CD8-positive, alpha-beta T cell (primary cell): ENCODE measurements at regions of chr1 and their contacts with region 1.

Region 1: GRCh38 chr1:231421993-231422764 is at the start of gene EGLN1:
- DNase-seq: peak; percentile 65 to 91 (median 79)
- ATAC-seq: peak; percentile 86
- H3K4me3 ChIP-seq: peak within 1 kb of the TSS; percentile 73 to 80
- H3K4me3 Mint-ChIP-seq: peak within 1 kb of the TSS; percentile 95
- H3K27ac ChIP-seq: peak within 1 kb of the TSS; percentile 40 to 60
- H3K27ac Mint-ChIP-seq: peak within 1 kb of the TSS; percentile 93
- H3K4me1 ChIP-seq: peaks cover 39% of the 10 kb centered on the region
- H3K4me1 Mint-ChIP-seq: peaks cover 48% of the 10 kb centered on the region
- H3K27me3 ChIP-seq: no peaks in the 10 kb centered on the region
- H3K27me3 Mint-ChIP-seq: no peaks in the 10 kb centered on the region
- CTCF ChIP-seq: peak; percentile 40
- total RNA-seq, gene EGLN1: 8.5 to 12.2 TPM

Region 2: DNA sequence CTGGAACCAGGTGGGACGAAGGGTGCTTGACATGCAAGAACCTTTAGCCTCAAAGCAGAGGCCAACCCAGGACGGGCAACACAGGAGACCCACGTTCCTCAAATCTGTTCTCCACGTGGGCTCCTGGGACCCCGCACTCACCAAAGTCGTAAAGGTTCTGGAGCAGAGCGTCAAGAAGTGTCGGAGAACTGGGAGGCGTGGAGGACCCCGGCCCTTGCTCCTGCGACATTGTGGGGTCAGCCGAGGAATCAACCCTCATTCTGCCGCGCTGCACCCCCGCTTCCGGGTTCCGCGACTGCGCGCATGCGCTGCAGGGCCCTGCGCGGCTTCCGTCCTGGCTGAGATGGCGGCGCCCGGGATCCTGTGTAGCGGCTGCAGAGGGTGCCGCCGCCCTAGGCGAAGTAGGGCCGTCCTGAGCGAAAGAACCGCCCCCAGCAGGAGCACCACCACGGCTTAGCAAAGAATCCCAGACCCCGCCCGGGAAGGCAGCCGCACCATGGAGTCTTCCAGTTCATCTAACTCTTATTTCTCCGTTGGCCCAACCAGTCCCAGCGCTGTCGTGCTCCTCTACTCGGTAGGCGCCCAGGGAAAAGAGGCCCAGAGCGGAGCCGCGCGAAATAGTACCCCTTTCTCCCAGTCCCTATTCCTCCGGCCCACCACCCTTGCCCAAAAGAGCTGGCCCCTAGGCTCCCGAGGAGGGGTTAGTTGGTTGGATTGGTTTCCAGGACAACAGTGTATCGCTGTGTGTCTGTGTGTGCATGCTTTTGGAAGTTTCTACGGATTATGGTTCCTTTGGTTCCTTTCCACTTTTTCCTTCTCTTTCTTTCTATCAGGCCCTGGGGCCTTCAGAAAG is 181.1 kb before region 1 on chr1 and contains the start of gene GNPAT:
- CTCF ChIA-PET with region 1: no interaction called
- POLR2A ChIA-PET with region 1: no interaction called
- intact Hi-C with region 1: loop called (anchors 1 to 2 kb)
- DNase-seq: peak; percentile 84 to 96 (median 91)
- ATAC-seq: peak; percentile 96
- H3K4me3 ChIP-seq: peak within 1 kb of the TSS; percentile 77
- H3K4me3 Mint-ChIP-seq: peak within 1 kb of the TSS; percentile 88
- H3K27ac ChIP-seq: peak within 1 kb of the TSS; percentile 79 to 80
- H3K27ac Mint-ChIP-seq: peak within 1 kb of the TSS; percentile 91
- H3K4me1 ChIP-seq: peaks cover 35% of the 10 kb centered on the region
- H3K4me1 Mint-ChIP-seq: peaks cover 78% of the 10 kb centered on the region
- H3K27me3 ChIP-seq: no peaks in the 10 kb centered on the region
- H3K27me3 Mint-ChIP-seq: no peaks in the 10 kb centered on the region
- CTCF ChIP-seq: no peak
- total RNA-seq, gene GNPAT: 10.4 to 11.0 TPM

Region 3: DNA sequence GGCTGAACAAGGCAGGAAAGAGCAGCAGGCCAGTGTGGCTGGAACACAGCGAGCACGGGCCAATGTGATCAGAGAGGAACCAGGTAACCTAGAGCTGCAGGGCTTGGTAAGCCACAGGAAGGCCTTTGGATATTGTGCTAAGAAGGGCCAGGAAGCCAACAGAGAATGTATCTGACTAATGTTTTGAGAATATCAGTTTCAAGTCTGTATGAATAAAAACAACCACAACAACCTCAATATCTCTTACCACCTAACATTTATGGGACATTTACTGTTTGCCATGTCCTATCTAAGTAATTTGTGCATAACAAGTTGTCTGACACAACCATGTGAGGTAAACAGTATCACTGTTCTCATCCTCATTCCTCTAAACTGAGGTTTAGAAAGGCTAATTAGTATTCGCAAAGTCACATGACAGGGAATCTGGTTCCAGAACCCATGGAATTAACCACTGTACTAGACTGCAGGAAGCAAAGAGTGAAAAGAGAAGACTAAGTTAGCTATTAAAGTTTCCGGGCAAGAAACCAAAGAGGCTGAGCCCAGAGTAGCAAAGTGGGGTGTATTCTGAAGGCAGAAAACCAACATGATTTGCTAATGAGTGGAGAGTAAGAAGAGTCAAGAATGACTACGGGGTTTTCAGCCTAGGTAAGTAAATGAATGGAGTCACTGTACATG is 45.2 kb before region 1 on chr1:
- CTCF ChIA-PET with region 1: no interaction called
- POLR2A ChIA-PET with region 1: interaction called, 6 read pairs
- intact Hi-C with region 1: loop called in 1 of 2 experiments (anchors 5 kb)
- DNase-seq: no peak
- ATAC-seq: peak; percentile 42
- H3K4me3 ChIP-seq: no peak overlapping the region
- H3K4me3 Mint-ChIP-seq: no peak overlapping the region
- H3K27ac ChIP-seq: no peak overlapping the region
- H3K27ac Mint-ChIP-seq: peak overlapping the region; percentile 55
- H3K4me1 ChIP-seq: peaks cover 4% of the 10 kb centered on the region
- H3K4me1 Mint-ChIP-seq: peaks cover 43% of the 10 kb centered on the region
- H3K27me3 ChIP-seq: no peaks in the 10 kb centered on the region
- H3K27me3 Mint-ChIP-seq: no peaks in the 10 kb centered on the region
- CTCF ChIP-seq: no peak

Region 4: GRCh38 chr1:231460614-231461013 is 38.4 kb after region 1 on chr1:
- CTCF ChIA-PET with region 1: no interaction called
- POLR2A ChIA-PET with region 1: no interaction called
- intact Hi-C with region 1: loop called in 1 of 2 experiments (anchors 1 kb)
- DNase-seq: peak; percentile 12 to 89 (median 54)
- ATAC-seq: peak; percentile 77
- H3K4me3 ChIP-seq: no peak overlapping the region
- H3K4me3 Mint-ChIP-seq: no peak overlapping the region
- H3K27ac ChIP-seq: no peak overlapping the region
- H3K27ac Mint-ChIP-seq: no peak overlapping the region
- H3K4me1 ChIP-seq: peaks cover 12% of the 10 kb centered on the region
- H3K4me1 Mint-ChIP-seq: peaks cover 17% of the 10 kb centered on the region
- H3K27me3 ChIP-seq: peaks cover 13 to 21% of the 10 kb centered on the region in 2 experiments
- H3K27me3 Mint-ChIP-seq: peaks cover 65% of the 10 kb centered on the region
- CTCF ChIP-seq: no peak

Region 5: GRCh38 chr1:231603598-231604275 is 181.6 kb after region 1 on chr1:
- CTCF ChIA-PET with region 1: no interaction called
- POLR2A ChIA-PET with region 1: interaction called, 3 read pairs
- intact Hi-C with region 1: loop called (anchors 1 to 5 kb)
- DNase-seq: peak in 7 of 9 experiments; percentile 6 to 73 (median 36)
- ATAC-seq: peak; percentile 89
- H3K4me3 ChIP-seq: peak overlapping the region; percentile 62 to 74
- H3K4me3 Mint-ChIP-seq: peak overlapping the region; percentile 95
- H3K27ac ChIP-seq: peak overlapping the region; percentile 21 to 40
- H3K27ac Mint-ChIP-seq: peak overlapping the region; percentile 89
- H3K4me1 ChIP-seq: peaks cover 4% of the 10 kb centered on the region
- H3K4me1 Mint-ChIP-seq: peaks cover 8% of the 10 kb centered on the region
- H3K27me3 ChIP-seq: no peaks in the 10 kb centered on the region
- H3K27me3 Mint-ChIP-seq: no peaks in the 10 kb centered on the region
- CTCF ChIP-seq: peak; percentile 74